Naive thymus-derived CD8-positive, alpha-beta T cell (primary cell): ENCODE measurements at regions of chr5 and their contacts with region 1.

Region 1: DNA sequence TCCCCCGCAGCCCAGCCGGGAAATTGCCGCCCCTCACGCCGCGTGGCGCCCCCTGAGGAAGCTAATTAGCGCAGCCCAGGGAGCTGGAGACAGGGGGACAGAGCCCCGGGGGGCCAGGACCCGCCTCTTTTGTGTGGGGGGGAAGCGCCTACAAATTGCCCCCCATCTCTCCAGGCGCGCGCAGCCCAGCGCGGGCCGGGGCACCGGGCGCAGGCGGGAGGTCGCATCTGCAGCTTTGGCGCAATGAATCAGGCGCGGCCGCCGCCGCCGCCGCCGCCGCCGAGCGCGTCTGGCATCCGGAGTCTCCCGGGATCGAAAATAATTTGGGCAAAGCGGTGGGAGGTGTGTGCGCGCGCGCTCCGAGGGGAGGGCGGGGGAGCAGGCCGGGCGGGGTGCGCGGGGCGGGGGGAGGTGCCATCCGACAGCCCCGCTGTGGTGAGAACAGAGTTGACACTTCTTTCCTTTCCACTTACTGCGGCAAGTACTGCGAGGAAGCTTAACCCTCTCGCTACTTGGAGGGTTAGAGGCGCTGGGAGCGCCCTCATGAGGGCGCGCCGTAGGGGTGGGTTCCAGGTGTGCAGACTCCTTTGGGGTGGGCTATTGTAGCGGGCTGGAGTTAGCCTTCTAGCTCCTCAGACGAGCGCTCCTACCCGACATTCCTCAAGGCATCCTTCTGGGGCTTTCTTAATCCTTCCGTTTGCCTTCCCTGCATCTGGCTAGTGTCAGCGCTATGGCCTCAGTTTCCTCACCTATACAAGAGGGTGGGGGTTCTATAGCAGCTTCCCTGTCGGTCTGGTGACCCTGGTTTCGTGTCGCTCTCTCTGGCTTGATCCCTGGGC is 63.1 kb downstream of the CXXC5 start:
- DNase-seq: peak; percentile 28 to 77 (median 64)
- ATAC-seq: peak; percentile 54 to 65
- H3K4me3 Mint-ChIP-seq: peak overlapping the region; percentile 72 to 87 (median 75)
- H3K27ac Mint-ChIP-seq: peak overlapping the region in 8 of 10 donors; percentile 65 to 96 (median 89)
- H3K4me1 Mint-ChIP-seq: peaks cover 14 to 45% (median 39%) of the 10 kb centered on the region in 4 donors
- H3K27me3 Mint-ChIP-seq: no peaks in the 10 kb centered on the region

Region 2: GRCh38 chr5:139698490-139699146 is 12.7 kb before region 1 on chr5:
- POLR2A ChIA-PET with region 1: interaction called, 22 read pairs
- DNase-seq: peak in 1 of 10 donors; percentile 25
- ATAC-seq: no peak
- H3K4me3 Mint-ChIP-seq: peak overlapping the region in 9 of 10 donors; percentile 42 to 76 (median 62)
- H3K27ac Mint-ChIP-seq: peak overlapping the region in 5 of 10 donors; percentile 10 to 66 (median 43)
- H3K4me1 Mint-ChIP-seq: peaks cover 22 to 51% (median 35%) of the 10 kb centered on the region in 4 donors
- H3K27me3 Mint-ChIP-seq: peaks cover 0 to 15% (median 0%) of the 10 kb centered on the region in 5 donors